ENCODE measurements at regions of chr15 and their contacts with region 1.

Region 1: GRCh38 chr15:59492389-59493377 is 54.7 kb downstream of the FAM81A start:
- DNase-seq: peak; percentile 30 to 79 (median 42)
- ATAC-seq: peak; percentile 79
- H3K4me3 ChIP-seq: no peak overlapping the region
- H3K4me3 Mint-ChIP-seq: no peak overlapping the region
- H3K27ac ChIP-seq: no peak overlapping the region
- H3K27ac Mint-ChIP-seq: no peak overlapping the region
- H3K4me1 ChIP-seq: peaks cover 5% of the 10 kb centered on the region
- H3K4me1 Mint-ChIP-seq: no peaks in the 10 kb centered on the region
- H3K27me3 ChIP-seq: no peaks in the 10 kb centered on the region
- H3K27me3 Mint-ChIP-seq: no peaks in the 10 kb centered on the region
- CTCF ChIP-seq: peak; percentile 95

Region 2: DNA sequence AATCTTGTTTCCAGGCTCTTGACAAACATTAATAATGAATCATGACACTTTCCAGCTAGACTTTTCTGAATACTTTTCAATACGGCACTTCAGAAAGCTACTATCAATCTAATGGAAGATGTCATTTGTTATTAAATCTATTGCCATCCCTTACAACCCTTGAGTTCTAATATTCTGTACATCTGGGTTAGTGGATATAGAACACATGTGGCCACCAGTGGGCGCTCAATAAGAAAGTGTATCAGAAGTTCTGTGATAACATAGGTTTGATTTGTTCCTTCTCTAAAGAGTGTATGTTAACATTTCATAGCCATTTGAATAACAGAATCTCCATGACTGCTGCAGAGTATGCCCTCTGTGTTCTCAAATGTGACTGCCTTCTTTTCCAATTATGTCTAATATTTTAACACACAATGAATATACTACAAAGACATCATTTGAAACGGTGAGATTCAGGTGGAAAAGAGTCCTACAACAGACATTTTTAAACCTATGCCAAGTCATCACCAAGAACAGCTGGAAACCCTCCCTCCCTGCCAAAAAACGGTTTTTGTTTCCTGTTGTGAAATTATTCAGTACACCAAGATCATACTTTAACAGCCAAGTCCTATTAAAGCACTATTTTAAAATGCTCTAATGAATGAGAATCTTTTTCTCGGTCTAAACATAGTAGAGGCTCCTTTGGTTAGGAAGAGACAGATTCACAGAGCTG is 1449.3 kb before region 1 on chr15:
- CTCF ChIA-PET with region 1: no interaction called
- POLR2A ChIA-PET with region 1: no interaction called
- intact Hi-C with region 1: loop called in 1 of 2 experiments (anchors 10 kb)
- DNase-seq: peak in 9 of 14 experiments; percentile 13 to 56 (median 37)
- ATAC-seq: no peak
- H3K4me3 ChIP-seq: no peak overlapping the region
- H3K4me3 Mint-ChIP-seq: no peak overlapping the region
- H3K27ac ChIP-seq: no peak overlapping the region
- H3K27ac Mint-ChIP-seq: no peak overlapping the region
- H3K4me1 ChIP-seq: no peaks in the 10 kb centered on the region
- H3K4me1 Mint-ChIP-seq: no peaks in the 10 kb centered on the region
- H3K27me3 ChIP-seq: peaks cover 2 to 18% of the 10 kb centered on the region in 2 experiments
- H3K27me3 Mint-ChIP-seq: peaks cover 65% of the 10 kb centered on the region
- CTCF ChIP-seq: peak; percentile 63

Region 3: DNA sequence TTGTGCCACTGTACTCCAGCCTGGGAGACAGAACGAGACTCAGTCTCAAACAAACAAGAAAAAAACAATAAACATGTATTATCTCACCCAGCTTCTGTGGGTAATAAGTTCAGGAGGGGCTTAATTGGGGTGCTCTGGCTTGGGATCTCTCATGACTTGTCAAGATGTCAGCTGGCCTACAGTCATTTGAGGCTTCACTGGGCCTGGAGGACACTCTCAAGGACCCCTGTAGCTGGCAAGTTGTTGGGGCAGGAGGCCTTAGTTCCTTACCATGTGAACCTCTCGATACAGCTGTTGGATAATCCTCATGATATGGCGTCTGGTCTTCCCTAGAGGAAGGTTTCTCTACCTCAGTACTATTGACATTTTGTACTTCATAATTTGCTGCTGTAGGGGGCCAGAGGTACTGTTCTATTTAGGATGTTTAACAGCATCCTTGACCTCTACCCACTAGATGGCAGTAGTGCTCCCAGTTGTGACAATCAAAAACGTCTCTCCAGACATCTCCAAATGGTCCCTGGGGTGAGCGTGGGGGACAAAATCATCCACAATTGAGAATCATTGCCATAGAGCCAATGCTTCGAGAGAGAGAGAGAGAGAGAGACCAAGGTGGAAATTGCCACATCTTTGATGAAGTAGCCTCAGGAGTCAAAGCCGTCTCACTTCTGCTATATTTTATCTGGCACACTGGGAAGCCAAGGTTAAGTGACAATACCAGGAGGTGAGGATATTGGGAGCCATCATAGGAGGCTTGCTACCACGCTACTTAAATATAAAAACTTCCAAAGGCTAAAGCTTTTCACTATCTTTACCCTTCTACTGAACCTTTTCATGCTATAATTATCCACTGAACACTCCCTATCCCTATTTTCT is 535.3 kb before region 1 on chr15:
- CTCF ChIA-PET with region 1: interaction called, 3 read pairs
- POLR2A ChIA-PET with region 1: no interaction called
- intact Hi-C with region 1: loop called (anchors 1 to 2 kb)
- DNase-seq: peak; percentile 10 to 85 (median 40)
- ATAC-seq: peak; percentile 99
- H3K4me3 ChIP-seq: no peak overlapping the region
- H3K4me3 Mint-ChIP-seq: no peak overlapping the region
- H3K27ac ChIP-seq: no peak overlapping the region
- H3K27ac Mint-ChIP-seq: no peak overlapping the region
- H3K4me1 ChIP-seq: peaks cover 8% of the 10 kb centered on the region
- H3K4me1 Mint-ChIP-seq: peaks cover 5% of the 10 kb centered on the region
- H3K27me3 ChIP-seq: no peaks in the 10 kb centered on the region
- H3K27me3 Mint-ChIP-seq: no peaks in the 10 kb centered on the region
- CTCF ChIP-seq: peak; percentile 83

Region 4: DNA sequence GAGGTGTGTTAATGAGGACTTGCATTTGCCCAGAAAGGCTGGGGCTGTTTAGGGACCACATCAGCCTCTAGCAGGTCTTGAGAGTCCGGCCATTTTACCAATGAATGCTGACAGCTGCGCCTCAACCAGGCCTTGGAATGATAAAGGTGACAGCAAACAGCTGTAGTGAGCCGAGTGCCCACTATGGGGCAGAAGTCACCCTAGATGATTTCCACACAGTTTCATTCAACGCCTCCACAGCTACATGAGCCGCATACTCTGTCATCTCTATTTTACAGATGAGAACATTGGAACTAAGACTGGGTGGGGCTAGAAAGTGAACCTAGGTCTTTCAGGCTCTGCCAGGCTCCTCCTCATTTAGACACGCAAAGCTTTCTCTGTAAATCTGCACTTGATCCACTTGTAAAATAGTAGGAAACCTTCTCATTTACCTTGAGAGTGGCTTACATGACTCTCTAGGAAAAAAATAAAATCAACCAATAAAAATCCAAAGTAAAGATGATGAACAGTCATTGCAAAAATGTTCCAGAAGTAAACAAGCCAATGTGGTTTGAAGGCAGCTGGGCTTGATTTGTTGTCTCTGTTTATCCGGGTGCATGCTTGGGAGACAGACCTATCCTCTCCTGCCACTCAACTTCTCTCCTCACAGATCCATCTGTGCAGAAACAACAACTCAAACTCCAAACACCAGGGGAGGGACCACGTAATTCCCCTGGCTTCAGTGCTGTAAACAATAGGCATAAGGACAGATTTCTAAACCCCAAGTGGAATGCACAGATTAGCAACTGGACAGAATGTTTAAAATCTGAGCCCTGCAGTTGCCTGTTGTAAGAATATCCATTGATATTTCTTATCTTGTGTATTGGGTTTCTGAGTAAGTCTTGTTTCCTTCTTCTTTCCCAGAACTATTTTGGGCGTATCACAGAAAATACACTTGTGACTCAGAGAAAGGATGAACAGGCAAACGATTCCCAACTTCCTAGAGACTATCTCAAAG is 317.6 kb before region 1 on chr15:
- CTCF ChIA-PET with region 1: no interaction called
- POLR2A ChIA-PET with region 1: no interaction called
- intact Hi-C with region 1: loop called (anchors 5 to 10 kb)
- DNase-seq: peak in 8 of 14 experiments; percentile 3 to 60 (median 10)
- ATAC-seq: peak; percentile 60
- H3K4me3 ChIP-seq: no peak overlapping the region
- H3K4me3 Mint-ChIP-seq: no peak overlapping the region
- H3K27ac ChIP-seq: no peak overlapping the region
- H3K27ac Mint-ChIP-seq: no peak overlapping the region
- H3K4me1 ChIP-seq: no peaks in the 10 kb centered on the region
- H3K4me1 Mint-ChIP-seq: no peaks in the 10 kb centered on the region
- H3K27me3 ChIP-seq: no peaks in the 10 kb centered on the region
- H3K27me3 Mint-ChIP-seq: peaks cover 29% of the 10 kb centered on the region
- CTCF ChIP-seq: peak; percentile 36

Region 5: GRCh38 chr15:59553879-59554735 is 61.4 kb after region 1 on chr15:
- CTCF ChIA-PET with region 1: no interaction called
- POLR2A ChIA-PET with region 1: no interaction called
- intact Hi-C with region 1: no loop called
- DNase-seq: no peak
- ATAC-seq: no peak
- H3K4me3 ChIP-seq: no peak overlapping the region
- H3K4me3 Mint-ChIP-seq: no peak overlapping the region
- H3K27ac ChIP-seq: no peak overlapping the region
- H3K27ac Mint-ChIP-seq: no peak overlapping the region
- H3K4me1 ChIP-seq: no peaks in the 10 kb centered on the region
- H3K4me1 Mint-ChIP-seq: no peaks in the 10 kb centered on the region
- H3K27me3 ChIP-seq: no peaks in the 10 kb centered on the region
- H3K27me3 Mint-ChIP-seq: no peaks in the 10 kb centered on the region
- CTCF ChIP-seq: no peak

Measured in CD4-positive, alpha-beta T cell (primary cell).